Calu3 (cell line): ENCODE measurements at regions of chr3 and their contacts with region 1.

Region 1: DNA sequence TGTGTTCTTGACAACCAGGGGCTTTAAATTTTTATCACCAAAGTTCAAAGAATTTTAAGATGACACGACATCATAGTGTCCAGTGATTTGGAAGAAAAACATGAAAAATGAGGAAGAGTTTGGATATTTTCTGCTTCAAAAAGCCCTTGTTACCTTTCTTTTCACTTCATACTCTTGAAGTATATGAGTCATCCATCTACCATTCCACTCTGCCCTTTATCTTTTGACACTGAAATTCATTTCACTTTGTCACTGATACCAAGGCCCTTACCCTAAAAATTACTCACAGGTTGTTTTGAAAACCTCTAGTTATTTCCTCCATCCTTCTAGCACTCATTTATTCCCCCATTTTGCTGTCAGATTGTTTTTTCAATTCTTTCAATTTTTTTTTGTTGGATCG is 42.7 kb downstream of the OR5H15 start:
- DNase-seq: no peak
- H3K4me3 Mint-ChIP-seq: no peak overlapping the region
- H3K27ac Mint-ChIP-seq: no peak overlapping the region
- H3K4me1 Mint-ChIP-seq: peaks cover 13% of the 10 kb centered on the region
- H3K27me3 Mint-ChIP-seq: peaks cover 2% of the 10 kb centered on the region
- CTCF ChIP-seq: no peak

Region 2: GRCh38 chr3:97719156-97719821 is 490.0 kb before region 1 on chr3:
- CTCF ChIA-PET with region 1: no interaction called
- intact Hi-C with region 1: no loop called
- DNase-seq: peak; percentile 67
- H3K4me3 Mint-ChIP-seq: no peak overlapping the region
- H3K27ac Mint-ChIP-seq: no peak overlapping the region
- H3K4me1 Mint-ChIP-seq: no peaks in the 10 kb centered on the region
- H3K27me3 Mint-ChIP-seq: no peaks in the 10 kb centered on the region
- CTCF ChIP-seq: peak; percentile 74

Region 3: GRCh38 chr3:98154686-98155085 is 54.6 kb before region 1 on chr3:
- CTCF ChIA-PET with region 1: no interaction called
- intact Hi-C with region 1: loop called (anchors 1 kb)
- DNase-seq: no peak
- H3K4me3 Mint-ChIP-seq: no peak overlapping the region
- H3K27ac Mint-ChIP-seq: no peak overlapping the region
- H3K4me1 Mint-ChIP-seq: peaks cover 10% of the 10 kb centered on the region
- H3K27me3 Mint-ChIP-seq: no peaks in the 10 kb centered on the region
- CTCF ChIP-seq: no peak

Region 4: GRCh38 chr3:98199020-98199419 is 10.2 kb before region 1 on chr3:
- CTCF ChIA-PET with region 1: no interaction called
- intact Hi-C with region 1: no loop called
- DNase-seq: no peak
- H3K4me3 Mint-ChIP-seq: no peak overlapping the region
- H3K27ac Mint-ChIP-seq: no peak overlapping the region
- H3K4me1 Mint-ChIP-seq: no peaks in the 10 kb centered on the region
- H3K27me3 Mint-ChIP-seq: peaks cover 28% of the 10 kb centered on the region
- CTCF ChIP-seq: no peak